ENCODE measurements at regions of chr5 and their contacts with region 1.

Region 1: DNA sequence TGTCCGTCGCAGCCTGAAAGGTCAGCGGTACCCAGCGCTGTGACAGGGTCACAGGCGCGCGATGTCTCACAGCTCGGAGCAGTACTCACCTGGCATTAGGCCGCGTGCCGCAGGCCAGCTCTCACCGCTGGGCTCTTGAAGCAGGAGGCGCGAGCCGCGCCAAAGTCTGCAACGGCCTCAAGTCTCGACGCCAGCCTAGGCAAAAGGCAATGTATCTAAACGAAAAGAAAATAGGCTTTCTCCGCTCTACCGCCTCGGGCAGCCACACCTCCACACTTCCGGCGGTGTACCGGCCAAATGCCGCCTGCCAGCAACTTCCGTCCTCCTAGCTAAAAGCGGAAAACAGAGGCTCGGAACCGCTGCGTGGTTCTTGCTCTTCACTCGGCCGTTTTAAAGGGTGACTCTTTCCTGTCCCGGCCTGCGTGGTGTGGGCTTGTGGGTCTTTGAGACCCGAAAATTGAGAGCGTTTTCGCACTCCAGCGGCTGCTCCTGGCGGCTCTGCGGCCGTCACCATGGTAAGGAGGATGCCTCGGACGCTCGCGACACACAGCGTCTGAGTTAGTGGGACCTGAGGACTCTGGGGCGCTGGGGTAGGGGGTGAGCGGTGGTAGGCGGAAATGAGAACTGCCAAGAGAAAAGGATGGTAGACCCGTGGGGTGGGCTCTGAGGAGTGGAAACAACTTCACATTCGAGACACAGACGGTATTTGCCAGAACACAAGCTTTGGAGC is at the starts of genes GFM2 and NSA2:
- DNase-seq: peak; percentile 95
- H3K4me3 ChIP-seq: peak within 1 kb of the TSS; percentile 96
- H3K27ac ChIP-seq: peak within 1 kb of the TSS; percentile 66
- H3K4me1 ChIP-seq: peaks cover 21% of the 10 kb centered on the region
- CTCF ChIP-seq: no peak
- total RNA-seq, gene GFM2: 35.0 and 50.3 TPM in 2 replicates
- total RNA-seq, gene NSA2: 79.2 and 117 TPM in 2 replicates

Region 2: DNA sequence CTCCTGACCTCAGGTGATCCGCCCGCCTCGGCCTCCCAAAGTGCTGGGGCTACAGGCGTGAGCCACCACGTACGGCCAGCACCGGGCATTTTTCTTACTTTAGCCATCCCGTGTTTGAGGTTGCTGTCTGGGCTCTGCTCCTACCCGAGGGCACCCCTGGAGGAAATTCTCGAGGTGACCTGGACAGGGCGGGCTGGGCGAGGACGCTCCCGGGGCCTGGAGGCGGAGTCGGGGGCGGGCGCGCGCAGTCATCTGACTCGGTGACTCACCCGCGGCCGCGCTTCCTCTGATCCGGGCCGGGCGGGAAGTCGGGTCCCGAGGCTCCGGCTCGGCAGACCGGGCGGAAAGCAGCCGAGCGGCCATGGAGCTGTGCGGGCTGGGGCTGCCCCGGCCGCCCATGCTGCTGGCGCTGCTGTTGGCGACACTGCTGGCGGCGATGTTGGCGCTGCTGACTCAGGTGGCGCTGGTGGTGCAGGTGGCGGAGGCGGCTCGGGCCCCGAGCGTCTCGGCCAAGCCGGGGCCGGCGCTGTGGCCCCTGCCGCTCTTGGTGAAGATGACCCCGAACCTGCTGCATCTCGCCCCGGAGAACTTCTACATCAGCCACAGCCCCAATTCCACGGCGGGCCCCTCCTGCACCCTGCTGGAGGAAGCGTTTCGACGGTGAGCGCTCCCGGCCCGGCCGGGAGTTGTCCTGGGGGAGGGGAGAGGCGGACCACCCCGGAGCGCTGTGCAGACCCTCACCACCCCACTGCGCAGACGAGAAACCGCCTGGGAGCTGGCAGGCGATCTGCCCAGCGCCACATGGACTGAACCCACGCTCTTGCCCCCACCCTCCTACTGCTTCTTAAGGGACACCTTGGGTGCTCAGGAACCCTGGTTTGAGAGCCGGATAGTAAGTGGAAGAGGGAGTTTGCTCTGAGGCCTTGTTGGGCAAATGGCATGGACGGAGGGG is 81.8 kb before region 1 on chr5 and contains the start of gene HEXB:
- CTCF ChIA-PET with region 1: no interaction called
- POLR2A ChIA-PET with region 1: no interaction called
- intact Hi-C with region 1: loop called (anchors 5 kb)
- DNase-seq: peak; percentile 72
- H3K4me3 ChIP-seq: peak within 1 kb of the TSS; percentile 81
- H3K27ac ChIP-seq: no peak within 1 kb of the TSS
- H3K4me1 ChIP-seq: peaks cover 25% of the 10 kb centered on the region
- CTCF ChIP-seq: peak; percentile 40
- total RNA-seq, gene HEXB: 23.8 and 27.4 TPM in 2 replicates

Region 3: GRCh38 chr5:75185763-75186162 is 418.7 kb after region 1 on chr5:
- CTCF ChIA-PET with region 1: no interaction called
- POLR2A ChIA-PET with region 1: no interaction called
- intact Hi-C with region 1: no loop called
- DNase-seq: no peak
- H3K4me3 ChIP-seq: no peak overlapping the region
- H3K27ac ChIP-seq: no peak overlapping the region
- H3K4me1 ChIP-seq: no peaks in the 10 kb centered on the region
- CTCF ChIP-seq: no peak

Region 4: GRCh38 chr5:75681125-75681830 is 914.3 kb after region 1 on chr5:
- CTCF ChIA-PET with region 1: no interaction called
- POLR2A ChIA-PET with region 1: no interaction called
- intact Hi-C with region 1: loop called (anchors 10 kb)
- DNase-seq: peak; percentile 61
- H3K4me3 ChIP-seq: no peak overlapping the region
- H3K27ac ChIP-seq: no peak overlapping the region
- H3K4me1 ChIP-seq: no peaks in the 10 kb centered on the region
- CTCF ChIP-seq: peak; percentile 80

Region 5: DNA sequence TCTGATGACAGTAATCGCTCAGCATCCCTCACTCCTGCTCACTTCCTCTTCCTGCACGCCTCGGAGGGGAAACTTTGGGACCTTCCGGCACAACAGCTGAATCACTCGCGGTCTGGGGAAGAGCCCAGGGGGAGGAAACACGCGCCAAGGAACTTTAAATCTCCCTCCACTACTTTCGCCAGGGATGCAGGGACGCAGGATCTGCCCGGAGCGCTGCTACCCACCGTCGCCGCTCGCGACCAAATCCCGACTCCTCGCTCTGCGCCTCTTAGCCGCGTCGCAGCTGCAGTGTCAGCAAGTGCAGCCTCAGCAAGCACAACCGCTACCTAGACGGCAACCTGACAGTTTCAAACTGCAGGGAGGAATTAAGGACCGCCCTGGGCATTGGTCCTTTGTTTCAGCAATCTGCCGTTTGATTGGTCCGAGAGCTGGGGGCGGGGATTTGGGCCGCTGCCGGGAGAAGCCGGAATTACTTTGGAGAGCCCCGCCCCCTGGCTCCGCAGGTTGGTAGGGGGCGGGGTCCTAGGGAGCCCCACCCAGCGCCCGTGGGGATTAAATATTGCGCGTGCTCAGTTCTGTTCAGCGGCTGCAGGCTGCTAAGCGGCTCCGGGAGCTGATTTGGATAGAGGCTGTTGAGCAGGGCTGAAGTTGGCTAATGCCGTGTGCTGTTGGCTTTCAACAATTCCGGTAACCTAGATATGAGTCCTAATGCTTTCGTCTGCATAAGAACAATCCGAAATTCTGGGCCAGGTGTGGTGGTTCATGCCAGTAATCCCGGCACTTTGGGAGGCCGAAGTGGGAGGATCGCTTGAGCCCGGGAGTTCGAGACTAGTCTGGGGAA is 950.3 kb after region 1 on chr5 and contains the start of gene POC5:
- CTCF ChIA-PET with region 1: no interaction called
- POLR2A ChIA-PET with region 1: no interaction called
- intact Hi-C with region 1: loop called (anchors 2 kb)
- DNase-seq: peak; percentile 97
- H3K4me3 ChIP-seq: peak within 1 kb of the TSS; percentile 97
- H3K27ac ChIP-seq: peak within 1 kb of the TSS; percentile 92
- H3K4me1 ChIP-seq: peaks cover 11% of the 10 kb centered on the region
- CTCF ChIP-seq: no peak
- total RNA-seq, gene POC5: 10.7 and 20.5 TPM in 2 replicates

Measured in OCI-LY7 (cell line).